ENCODE measurements at regions of chr10 and their contacts with region 1.

Region 1: DNA sequence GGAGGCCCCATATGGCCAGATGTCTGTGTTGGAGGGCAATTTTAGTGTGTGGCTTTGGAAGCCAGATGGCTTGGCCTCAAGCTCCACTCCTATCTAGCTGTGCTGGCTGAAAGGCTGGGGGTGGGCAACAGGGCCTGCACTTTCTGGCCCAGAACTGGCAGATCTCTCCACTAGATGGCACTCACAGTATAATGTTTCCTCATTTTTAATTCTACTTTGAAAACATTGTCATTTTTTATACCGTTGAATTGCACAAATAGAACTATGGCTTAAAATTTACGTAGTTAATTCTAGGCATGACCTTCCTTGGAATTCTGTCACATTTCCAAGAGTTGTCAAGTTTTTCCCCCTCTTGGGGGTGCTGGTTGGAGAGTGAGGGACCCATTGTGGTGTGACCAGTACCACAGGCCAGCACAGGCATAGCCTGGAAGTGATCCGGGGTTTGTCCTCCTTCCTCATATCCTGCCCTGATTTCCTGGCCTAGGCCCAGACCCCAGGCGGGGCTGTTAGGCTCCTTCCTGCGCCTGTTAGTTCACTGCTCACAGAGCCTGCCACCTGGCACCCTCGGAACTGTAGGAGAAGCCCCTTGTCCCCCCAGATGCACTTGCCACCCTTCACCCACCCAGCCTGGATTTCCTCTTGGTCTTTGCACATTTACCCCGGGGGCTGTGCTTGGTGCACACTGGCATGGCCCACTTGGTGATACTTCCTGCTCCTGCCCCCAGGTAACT is 52.8 kb downstream of the ARHGAP22 start:
- DNase-seq: peak; percentile 87
- H3K4me3 ChIP-seq: no peak overlapping the region
- H3K27ac ChIP-seq: peak overlapping the region in 1 of 2 experiments; percentile 74; a peak in 2 of 4 replicates
- H3K4me1 ChIP-seq: peaks cover 0 to 27% of the 10 kb centered on the region in 2 experiments; a peak in 2 of 4 replicates
- H3K27me3 ChIP-seq: no peaks in the 10 kb centered on the region
- CTCF ChIP-seq: peak; percentile 85
- EP300 ChIP-seq: peak in 1 of 2 experiments; percentile 70; a peak in 2 of 4 replicates
- RAD21 ChIP-seq: peak; percentile 92

Region 2: GRCh38 chr10:48523820-48524758 is 27.9 kb before region 1 on chr10:
- CTCF ChIA-PET with region 1: interaction called, 16 read pairs
- POLR2A ChIA-PET with region 1: no interaction called
- DNase-seq: peak; percentile 95
- H3K4me3 ChIP-seq: peak overlapping the region; percentile 59 to 65
- H3K27ac ChIP-seq: peak overlapping the region in 1 of 2 experiments; percentile 42; a peak in 2 of 4 replicates
- H3K4me1 ChIP-seq: peaks cover 23 to 28% of the 10 kb centered on the region in 2 experiments; a peak in 3 of 4 replicates
- H3K27me3 ChIP-seq: no peaks in the 10 kb centered on the region
- CTCF ChIP-seq: peak; percentile 69
- EP300 ChIP-seq: no peak
- RAD21 ChIP-seq: peak; percentile 43

Region 3: DNA sequence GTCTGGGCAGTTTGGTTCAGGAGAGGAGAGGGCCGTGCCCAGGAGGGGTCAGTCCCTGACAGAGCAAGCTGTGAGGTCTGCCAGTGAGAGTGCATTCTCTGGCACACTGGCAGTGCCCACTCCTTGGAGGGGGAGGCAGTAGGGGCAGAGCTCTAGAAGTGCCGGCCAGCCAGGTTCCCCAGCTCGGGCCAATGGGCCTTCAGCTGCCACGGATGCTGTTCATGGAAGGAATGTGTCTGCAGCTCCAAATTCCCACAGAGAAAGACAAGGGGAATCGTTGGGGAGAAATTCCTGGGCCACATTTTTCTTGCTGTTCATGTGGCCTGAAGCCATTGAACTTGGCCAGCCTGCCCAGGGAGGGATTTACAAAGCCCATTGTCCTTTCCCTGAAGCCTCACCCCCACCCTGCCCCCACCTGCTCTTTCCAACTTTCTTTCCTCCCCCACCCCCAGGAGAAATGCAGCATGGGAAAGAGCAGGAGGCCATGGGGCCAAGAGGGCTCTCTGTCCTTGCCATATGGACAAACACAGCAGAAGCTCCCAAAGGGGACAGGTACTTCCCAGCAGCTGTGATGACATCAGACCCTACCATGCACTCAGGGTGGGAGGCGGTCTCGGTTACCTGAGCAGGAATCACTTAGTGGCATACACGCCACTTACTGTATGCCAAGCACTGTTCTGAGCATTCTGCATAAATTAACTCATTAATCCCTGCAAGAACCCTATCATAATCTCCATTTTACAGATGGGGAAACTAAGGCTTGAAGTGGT is 17.9 kb before region 1 on chr10:
- CTCF ChIA-PET with region 1: interaction called, 22 read pairs
- POLR2A ChIA-PET with region 1: no interaction called
- DNase-seq: no peak
- H3K4me3 ChIP-seq: no peak overlapping the region
- H3K27ac ChIP-seq: no peak overlapping the region
- H3K4me1 ChIP-seq: no peaks in the 10 kb centered on the region; a peak in 1 of 4 replicates
- H3K27me3 ChIP-seq: no peaks in the 10 kb centered on the region
- CTCF ChIP-seq: no peak
- EP300 ChIP-seq: no peak
- RAD21 ChIP-seq: no peak

Region 4: DNA sequence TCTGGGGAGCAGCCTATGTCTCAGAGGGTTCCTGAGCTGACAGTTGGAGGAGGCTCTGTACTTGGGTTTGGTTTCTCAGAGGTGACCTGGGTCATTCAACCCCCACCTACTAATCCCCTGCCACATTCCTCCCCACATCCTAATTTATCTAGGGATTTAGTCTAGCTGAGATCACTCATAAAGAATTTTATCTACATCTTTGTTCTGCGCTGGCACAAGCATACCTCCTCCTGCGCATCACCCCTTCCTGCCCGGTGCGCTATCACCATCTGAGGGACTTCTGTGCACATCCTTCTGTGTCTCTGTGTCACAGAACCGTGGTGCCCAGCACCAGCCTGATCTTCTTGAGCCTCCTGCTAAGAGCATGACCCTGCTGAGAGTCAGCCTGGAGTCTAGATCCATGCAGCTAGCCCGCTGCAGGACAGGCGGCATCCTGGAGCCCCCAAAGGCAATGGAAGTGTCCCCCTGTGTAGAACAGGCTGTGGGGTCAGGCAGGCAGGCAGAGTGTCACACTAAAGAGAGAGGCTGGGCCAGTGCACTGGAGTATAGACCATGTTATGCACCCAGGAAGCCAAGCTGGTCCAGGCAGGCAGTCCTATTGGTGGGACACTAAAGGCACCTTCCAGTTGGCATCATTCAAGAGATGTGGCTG is 10.8 kb before region 1 on chr10:
- CTCF ChIA-PET with region 1: interaction called, 29 read pairs
- POLR2A ChIA-PET with region 1: no interaction called
- DNase-seq: no peak
- H3K4me3 ChIP-seq: no peak overlapping the region
- H3K27ac ChIP-seq: peak overlapping the region in 1 of 2 experiments; percentile 27; a peak in 1 of 4 replicates
- H3K4me1 ChIP-seq: peaks cover 13 to 34% of the 10 kb centered on the region in 2 experiments; a peak in 3 of 4 replicates
- H3K27me3 ChIP-seq: no peaks in the 10 kb centered on the region
- CTCF ChIP-seq: no peak
- EP300 ChIP-seq: peak in 1 of 2 experiments; percentile 78; a peak in 1 of 4 replicates
- RAD21 ChIP-seq: no peak

Region 5: DNA sequence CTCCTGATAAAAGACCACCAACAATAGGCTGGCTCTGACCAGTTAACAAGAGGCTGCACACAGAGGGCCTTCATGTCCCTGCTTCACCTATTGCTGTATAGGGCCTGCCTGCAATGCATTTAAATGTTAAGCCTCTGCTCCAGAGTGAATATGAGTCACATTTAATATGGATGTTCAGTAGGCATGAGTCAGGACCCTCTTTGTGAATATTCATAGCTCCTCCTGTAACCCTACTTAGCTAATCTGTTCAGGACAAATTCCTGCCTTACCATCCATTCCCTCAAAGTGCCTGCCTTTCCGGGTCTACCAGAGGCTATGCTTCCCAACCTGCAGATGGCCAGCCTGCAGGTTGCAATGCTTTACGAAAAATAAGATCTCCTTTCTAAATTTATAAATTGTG is 20.4 kb after region 1 on chr10:
- CTCF ChIA-PET with region 1: interaction called, 18 read pairs
- POLR2A ChIA-PET with region 1: no interaction called
- DNase-seq: no peak
- H3K4me3 ChIP-seq: no peak overlapping the region
- H3K27ac ChIP-seq: 0 out of 4 replicates have a peak overlapping the region, but pooled peaks of 1 of the 2 experiments have one; percentile 2
- H3K4me1 ChIP-seq: peaks cover 0 to 6% of the 10 kb centered on the region in 2 experiments; a peak in 1 of 4 replicates
- H3K27me3 ChIP-seq: no peaks in the 10 kb centered on the region
- CTCF ChIP-seq: no peak
- EP300 ChIP-seq: no peak
- RAD21 ChIP-seq: no peak

Region 6: DNA sequence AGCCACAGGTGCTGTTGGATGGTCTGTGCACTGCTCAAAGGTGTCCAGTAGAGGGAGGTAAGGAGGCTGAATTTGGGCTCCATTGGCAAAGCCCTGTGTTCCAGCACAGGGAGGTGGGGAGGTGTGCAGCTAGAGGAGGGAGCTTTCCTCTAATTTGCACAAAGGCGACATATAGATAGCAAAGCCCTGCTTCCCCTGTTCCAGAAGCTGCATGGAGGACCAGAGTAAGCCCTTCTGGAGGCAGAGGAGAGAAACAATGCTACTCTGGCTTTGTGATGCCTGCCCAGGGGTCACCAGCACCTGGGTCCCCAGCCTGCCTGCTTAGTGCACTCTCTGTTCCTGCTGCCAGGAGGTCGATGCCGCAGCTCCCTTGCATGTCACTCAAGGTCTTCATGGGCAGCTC is 56.3 kb after region 1 on chr10:
- CTCF ChIA-PET with region 1: interaction called, 31 read pairs
- POLR2A ChIA-PET with region 1: no interaction called
- DNase-seq: peak; percentile 67
- H3K4me3 ChIP-seq: no peak overlapping the region
- H3K27ac ChIP-seq: peak overlapping the region in 1 of 2 experiments; percentile 80; a peak in 2 of 4 replicates
- H3K4me1 ChIP-seq: peaks cover 29 to 51% of the 10 kb centered on the region in 2 experiments
- H3K27me3 ChIP-seq: no peaks in the 10 kb centered on the region
- CTCF ChIP-seq: peak; percentile 75
- EP300 ChIP-seq: no peak
- RAD21 ChIP-seq: peak; percentile 65